HepG2 (cell line): ENCODE measurements at regions of chr5 and their contacts with region 1.

Region 1: GRCh38 chr5:176921714-176922113 is 22.6 kb upstream of the HK3 start:
- DNase-seq: no peak
- ATAC-seq: no peak
- H3K4me3 ChIP-seq: no peak overlapping the region
- H3K27ac ChIP-seq: no peak overlapping the region
- H3K4me1 ChIP-seq: no peaks in the 10 kb centered on the region
- H3K27me3 ChIP-seq: no peaks in the 10 kb centered on the region
- CTCF ChIP-seq: no peak
- EP300 ChIP-seq: no peak
- POLR2A ChIP-seq: no peak
- RAD21 ChIP-seq: no peak

Region 2: GRCh38 chr5:177049285-177049684 is 127.6 kb after region 1 on chr5:
- CTCF ChIA-PET with region 1: no interaction called
- POLR2A ChIA-PET with region 1: no interaction called
- in situ Hi-C with region 1: no loop called
- intact Hi-C with region 1: loop called (anchors 2 kb)
- DNase-seq: no peak
- ATAC-seq: no peak
- H3K4me3 ChIP-seq: no peak overlapping the region
- H3K27ac ChIP-seq: no peak overlapping the region
- H3K4me1 ChIP-seq: no peaks in the 10 kb centered on the region
- H3K27me3 ChIP-seq: no peaks in the 10 kb centered on the region
- CTCF ChIP-seq: no peak
- EP300 ChIP-seq: no peak
- POLR2A ChIP-seq: no peak
- RAD21 ChIP-seq: no peak

Region 3: GRCh38 chr5:177146891-177147638 is 225.4 kb after region 1 on chr5:
- CTCF ChIA-PET with region 1: no interaction called
- POLR2A ChIA-PET with region 1: no interaction called
- in situ Hi-C with region 1: no loop called
- intact Hi-C with region 1: no loop called
- DNase-seq: no peak
- ATAC-seq: no peak
- H3K4me3 ChIP-seq: no peak overlapping the region
- H3K27ac ChIP-seq: no peak overlapping the region
- H3K4me1 ChIP-seq: no peaks in the 10 kb centered on the region
- H3K27me3 ChIP-seq: no peaks in the 10 kb centered on the region; a peak in 1 of 5 replicates
- CTCF ChIP-seq: no peak
- EP300 ChIP-seq: no peak
- POLR2A ChIP-seq: no peak
- RAD21 ChIP-seq: no peak